Activated CD4-positive, alpha-beta memory T cell treated with anti-CD3 and anti-CD28 coated beads for 36 hours (primary cell): ENCODE measurements at regions of chr1 and their contacts with region 1.

Region 1: GRCh38 chr1:169367486-169368405 is at the starts of genes BLZF1 and NME7:
- DNase-seq: peak; percentile 99
- H3K4me3 Mint-ChIP-seq: peak within 1 kb of the TSS; percentile 43
- H3K27ac Mint-ChIP-seq: no peak within 1 kb of the TSS
- H3K4me1 Mint-ChIP-seq: peaks cover 30% of the 10 kb centered on the region
- H3K27me3 Mint-ChIP-seq: no peaks in the 10 kb centered on the region
- total RNA-seq, gene BLZF1: 10.1 to 10.2 TPM
- total RNA-seq, gene NME7: 12.9 to 15.9 TPM

Region 2: DNA sequence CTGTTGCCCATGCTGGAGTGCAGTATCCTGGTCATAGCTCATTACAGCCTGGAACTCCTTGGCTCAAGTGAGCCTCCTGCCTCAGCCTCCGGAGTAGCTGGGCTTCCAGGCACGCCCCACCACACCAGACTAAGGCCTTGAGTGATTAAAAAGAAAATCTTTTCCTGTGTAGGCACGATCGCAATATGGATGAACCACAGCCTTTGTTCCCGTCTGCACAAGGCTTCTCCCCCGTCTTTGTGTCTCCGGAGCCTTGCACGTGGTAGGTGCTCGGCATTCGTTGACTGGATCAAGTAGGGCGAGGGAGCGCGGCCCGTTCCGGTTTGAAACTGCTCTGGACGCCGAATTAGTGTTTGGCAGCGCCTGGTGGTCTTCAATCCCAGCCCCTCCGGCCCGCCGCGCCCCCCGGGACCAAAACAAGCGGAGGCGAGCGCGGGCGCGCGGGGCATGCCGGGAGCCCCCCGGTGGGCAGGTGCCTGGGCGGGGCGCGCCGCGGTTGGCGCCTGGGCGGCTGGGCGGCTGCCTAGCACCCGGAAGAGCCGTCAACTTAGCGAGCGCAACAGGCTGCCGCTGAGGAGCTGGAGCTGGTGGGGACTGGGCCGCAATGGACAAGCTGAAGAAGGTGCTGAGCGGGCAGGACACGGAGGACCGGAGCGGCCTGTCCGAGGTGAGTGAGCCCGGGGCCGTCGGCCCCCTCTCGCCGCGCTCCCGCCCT is 1142.1 kb before region 1 on chr1 and contains the start of gene SFT2D2:
- CTCF ChIA-PET with region 1: no interaction called
- POLR2A ChIA-PET with region 1: interaction called, 3 read pairs
- intact Hi-C with region 1: loop called (anchors 5 kb)
- DNase-seq: peak; percentile 83
- H3K4me3 Mint-ChIP-seq: peak within 1 kb of the TSS; percentile 91
- H3K27ac Mint-ChIP-seq: peak within 1 kb of the TSS; percentile 84
- H3K4me1 Mint-ChIP-seq: peaks cover 43% of the 10 kb centered on the region
- H3K27me3 Mint-ChIP-seq: peaks cover 7% of the 10 kb centered on the region
- total RNA-seq, gene SFT2D2: 52.3 to 52.9 TPM

Region 3: DNA sequence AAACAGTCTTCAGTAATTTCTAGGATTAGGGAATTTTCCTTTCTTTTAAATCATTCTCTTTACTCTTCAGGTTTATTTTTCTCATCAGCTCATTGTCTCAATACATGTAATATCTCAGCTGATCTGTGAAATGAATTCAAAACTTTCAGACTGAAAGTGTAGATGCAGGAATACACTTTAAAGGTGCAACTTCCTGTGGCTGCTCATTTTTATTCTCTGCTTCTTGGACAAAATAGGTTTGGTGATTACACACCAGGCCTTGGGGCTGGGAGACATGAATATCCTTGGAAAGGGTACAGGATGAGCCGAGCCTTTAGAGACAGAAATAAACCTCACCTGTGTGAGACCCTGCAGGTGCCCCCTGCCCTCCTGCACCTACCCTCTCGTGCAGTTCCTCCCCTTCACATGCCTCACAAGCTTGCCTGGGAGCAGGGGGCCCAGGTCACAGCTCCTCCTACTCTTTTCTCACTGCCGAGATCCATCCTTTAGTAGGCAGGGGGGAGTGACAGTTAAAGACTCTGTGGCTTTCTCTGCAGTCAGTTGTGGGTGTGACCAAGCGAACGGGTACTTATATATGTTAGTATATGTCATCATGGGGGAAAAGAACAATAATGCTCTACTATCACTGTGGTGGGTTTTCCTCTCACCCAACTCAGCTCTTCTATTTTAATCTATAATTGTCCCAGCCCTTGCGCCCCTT is 847.5 kb before region 1 on chr1:
- CTCF ChIA-PET with region 1: no interaction called
- POLR2A ChIA-PET with region 1: no interaction called
- intact Hi-C with region 1: loop called (anchors 5 kb)
- DNase-seq: peak; percentile 49
- H3K4me3 Mint-ChIP-seq: peak overlapping the region; percentile 32
- H3K27ac Mint-ChIP-seq: peak overlapping the region; percentile 73
- H3K4me1 Mint-ChIP-seq: peaks cover 48% of the 10 kb centered on the region
- H3K27me3 Mint-ChIP-seq: no peaks in the 10 kb centered on the region

Region 4: GRCh38 chr1:169133801-169134502 is 233.8 kb before region 1 on chr1:
- CTCF ChIA-PET with region 1: no interaction called
- POLR2A ChIA-PET with region 1: no interaction called
- intact Hi-C with region 1: loop called (anchors 10 kb)
- DNase-seq: no peak
- H3K4me3 Mint-ChIP-seq: no peak overlapping the region
- H3K27ac Mint-ChIP-seq: no peak overlapping the region
- H3K4me1 Mint-ChIP-seq: peaks cover 5% of the 10 kb centered on the region
- H3K27me3 Mint-ChIP-seq: no peaks in the 10 kb centered on the region

Region 5: GRCh38 chr1:169443923-169444322 is 76.2 kb after region 1 on chr1:
- CTCF ChIA-PET with region 1: no interaction called
- POLR2A ChIA-PET with region 1: no interaction called
- intact Hi-C with region 1: no loop called
- DNase-seq: no peak
- H3K4me3 Mint-ChIP-seq: no peak overlapping the region
- H3K27ac Mint-ChIP-seq: no peak overlapping the region
- H3K4me1 Mint-ChIP-seq: no peaks in the 10 kb centered on the region
- H3K27me3 Mint-ChIP-seq: peaks cover 5% of the 10 kb centered on the region

Region 6: DNA sequence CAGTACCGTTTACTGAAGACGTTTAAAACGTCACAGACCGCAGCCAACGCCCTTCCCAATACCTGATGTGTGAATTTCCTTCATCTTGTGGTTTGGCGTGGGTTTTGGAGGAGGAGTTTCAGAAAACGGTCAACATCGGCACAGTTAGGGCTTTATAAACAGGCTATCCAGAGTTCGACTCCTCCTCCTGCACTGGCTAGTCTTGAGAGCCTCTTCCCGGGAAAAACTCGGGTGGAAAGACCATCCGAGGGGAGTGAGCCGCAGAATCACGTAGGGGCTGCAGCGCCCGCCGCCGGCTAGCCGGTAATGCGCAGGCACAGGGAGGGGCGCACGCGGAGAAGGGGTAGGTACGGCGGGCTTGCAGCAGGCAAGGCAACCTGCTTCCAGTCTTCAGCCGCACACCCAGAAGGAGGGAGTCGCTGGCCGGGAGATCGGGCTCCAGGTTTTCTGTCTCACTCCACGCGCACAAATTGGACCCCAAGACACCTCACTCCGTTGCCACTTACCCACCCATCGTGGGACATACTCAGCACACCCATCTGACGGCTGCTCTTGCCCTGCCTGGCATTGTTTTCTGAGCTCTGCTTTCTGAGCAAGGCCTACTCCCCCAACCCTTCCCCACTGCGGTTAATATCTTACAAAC is 92.6 kb after region 1 on chr1:
- CTCF ChIA-PET with region 1: interaction called, 3 read pairs
- POLR2A ChIA-PET with region 1: no interaction called
- intact Hi-C with region 1: loop called (anchors 5 kb)
- DNase-seq: peak; percentile 43
- H3K4me3 Mint-ChIP-seq: peak overlapping the region; percentile 43
- H3K27ac Mint-ChIP-seq: no peak overlapping the region
- H3K4me1 Mint-ChIP-seq: peaks cover 18% of the 10 kb centered on the region
- H3K27me3 Mint-ChIP-seq: peaks cover 16% of the 10 kb centered on the region

Region 7: DNA sequence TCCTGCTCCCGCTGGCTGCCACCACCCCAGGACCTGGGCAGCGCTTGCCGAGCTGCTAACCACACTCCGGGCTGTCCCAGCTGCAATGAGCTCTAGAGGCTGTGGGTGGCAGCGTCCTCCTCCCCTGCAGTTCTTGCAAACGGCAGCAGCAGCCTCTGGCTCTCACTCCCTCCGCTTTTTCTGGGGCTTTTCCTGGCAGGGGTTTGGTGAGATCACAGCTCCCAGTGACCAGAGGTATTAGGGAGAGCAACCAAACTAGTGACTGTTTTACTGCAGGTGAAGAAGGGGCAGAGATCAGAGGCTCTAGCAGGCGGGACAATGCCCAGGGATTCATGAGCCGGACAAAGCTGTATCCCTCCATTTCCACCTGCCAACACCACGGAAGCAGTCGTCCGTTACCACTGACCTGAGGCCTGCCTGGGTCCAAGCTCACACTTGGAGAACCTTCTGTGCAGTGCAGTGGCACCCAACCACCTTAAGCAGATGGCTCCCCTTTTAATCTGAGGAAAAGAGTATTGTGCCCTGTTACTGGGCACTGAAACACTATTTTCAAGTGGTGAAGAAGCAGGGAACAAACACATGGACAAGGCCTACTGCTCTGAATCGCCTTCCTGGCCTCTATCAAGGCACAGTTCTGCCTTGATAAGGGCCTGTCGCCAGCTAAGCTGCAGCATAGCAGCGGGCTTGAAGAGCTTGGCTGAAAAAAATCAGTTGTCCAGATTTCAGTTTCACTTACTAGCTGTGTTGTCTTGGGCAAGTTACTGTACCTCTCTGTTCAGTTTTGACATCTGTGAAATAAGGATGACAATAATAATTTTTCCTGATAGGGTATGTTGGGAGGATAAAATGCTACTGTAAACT is 218.9 kb after region 1 on chr1 and contains the start of gene F5:
- CTCF ChIA-PET with region 1: interaction called, 3 read pairs
- POLR2A ChIA-PET with region 1: no interaction called
- intact Hi-C with region 1: loop called (anchors 2 kb)
- DNase-seq: peak; percentile 90
- H3K4me3 Mint-ChIP-seq: peak within 1 kb of the TSS; percentile 96
- H3K27ac Mint-ChIP-seq: peak within 1 kb of the TSS; percentile 94
- H3K4me1 Mint-ChIP-seq: peaks cover 61% of the 10 kb centered on the region
- H3K27me3 Mint-ChIP-seq: no peaks in the 10 kb centered on the region
- total RNA-seq, gene F5: 50.8 to 51.1 TPM

Region 8: DNA sequence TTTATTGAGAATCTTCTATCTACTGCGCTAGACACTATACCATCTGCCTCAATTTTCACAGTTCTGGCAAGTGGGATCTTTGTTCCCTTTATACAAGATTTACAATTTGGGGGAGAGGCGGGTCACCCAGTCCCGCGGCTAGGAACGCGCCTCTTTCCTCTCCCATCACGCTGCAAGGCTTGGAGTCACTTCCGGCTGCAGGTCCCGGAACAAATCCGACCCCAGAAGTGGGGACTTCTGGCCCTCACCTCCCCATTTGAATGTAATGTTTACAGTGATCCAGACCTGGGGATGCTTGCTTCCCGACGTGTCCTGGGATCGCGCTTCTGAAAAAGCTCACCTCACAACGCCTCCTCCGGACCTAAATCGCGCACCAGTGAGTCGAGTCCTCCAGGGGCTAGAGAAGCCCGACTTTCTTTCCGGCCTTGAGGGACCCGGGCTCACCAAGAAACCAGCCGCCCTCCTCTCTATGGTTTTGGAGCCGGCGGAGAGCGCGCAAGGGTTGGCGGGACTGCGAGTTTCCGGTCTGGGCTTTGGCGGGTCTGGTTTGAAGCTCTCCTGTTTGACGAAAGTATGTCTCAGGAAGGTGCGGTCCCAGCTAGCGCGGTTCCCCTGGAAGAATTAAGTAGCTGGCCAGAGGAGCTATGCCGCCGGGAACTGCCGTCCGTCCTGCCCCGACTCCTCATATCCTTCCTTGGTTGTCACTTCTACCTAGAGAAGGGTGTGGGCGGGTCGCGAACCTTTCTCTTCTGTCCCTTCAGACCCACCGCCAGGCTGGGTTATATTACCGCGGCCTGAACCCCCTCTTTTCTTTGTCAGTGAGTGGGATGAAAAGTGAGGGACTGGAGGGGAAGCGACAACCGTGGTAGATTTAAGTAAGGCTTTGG is 427.0 kb after region 1 on chr1 and contains the start of gene METTL18:
- CTCF ChIA-PET with region 1: no interaction called
- POLR2A ChIA-PET with region 1: interaction called, 3 read pairs
- intact Hi-C with region 1: loop called (anchors 1 kb)
- DNase-seq: peak; percentile 96
- H3K4me3 Mint-ChIP-seq: peak within 1 kb of the TSS; percentile 100
- H3K27ac Mint-ChIP-seq: peak within 1 kb of the TSS; percentile 99
- H3K4me1 Mint-ChIP-seq: peaks cover 44% of the 10 kb centered on the region
- H3K27me3 Mint-ChIP-seq: no peaks in the 10 kb centered on the region
- total RNA-seq, gene METTL18: 10.8 to 10.9 TPM